ENCODE measurements at regions of chr19 and their contacts with region 1.

Region 1: GRCh38 chr19:54137086-54137921 is at the start of gene CNOT3:
- DNase-seq: peak; percentile 95 to 100 (median 100)
- ATAC-seq: peak; percentile 80
- H3K4me3 Mint-ChIP-seq: peak within 1 kb of the TSS; percentile 78 to 94 (median 91)
- H3K27ac Mint-ChIP-seq: peak within 1 kb of the TSS; percentile 87 to 98 (median 92)
- H3K4me1 Mint-ChIP-seq: peaks cover 29 to 54% (median 52%) of the 10 kb centered on the region in 4 donors
- H3K27me3 Mint-ChIP-seq: no peaks in the 10 kb centered on the region
- polyA plus RNA-seq, gene CNOT3: 6.6 to 14.5 (median 7.9) TPM

Region 2: DNA sequence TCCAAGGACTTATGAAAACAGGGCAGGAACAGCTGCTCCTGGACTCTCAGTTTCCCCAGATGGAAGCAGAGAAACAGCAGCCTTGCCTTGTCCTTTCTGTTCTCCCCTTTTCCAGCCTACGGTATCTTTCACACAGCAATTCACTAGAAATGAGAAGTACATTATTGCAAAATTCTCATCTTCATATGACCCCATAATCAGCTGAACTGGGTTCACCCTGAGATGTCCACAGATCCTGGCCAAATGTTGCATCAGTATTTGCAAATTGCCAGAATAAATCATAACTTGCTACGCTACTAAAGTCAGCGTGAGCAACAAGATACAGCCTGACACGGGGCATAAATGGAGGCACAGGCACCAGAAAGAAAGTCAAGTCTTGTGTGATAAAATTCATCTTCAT is 89.7 kb before region 1 on chr19:
- POLR2A ChIA-PET with region 1: no interaction called
- DNase-seq: no peak
- ATAC-seq: no peak
- H3K4me3 Mint-ChIP-seq: no peak overlapping the region
- H3K27ac Mint-ChIP-seq: no peak overlapping the region
- H3K4me1 Mint-ChIP-seq: no peaks in the 10 kb centered on the region
- H3K27me3 Mint-ChIP-seq: peaks cover 23 to 47% (median 26%) of the 10 kb centered on the region in 5 donors

Region 3: GRCh38 chr19:54077334-54077733 is 60.0 kb before region 1 on chr19:
- POLR2A ChIA-PET with region 1: no interaction called
- DNase-seq: no peak
- ATAC-seq: no peak
- H3K4me3 Mint-ChIP-seq: no peak overlapping the region
- H3K27ac Mint-ChIP-seq: no peak overlapping the region
- H3K4me1 Mint-ChIP-seq: no peaks in the 10 kb centered on the region
- H3K27me3 Mint-ChIP-seq: peaks cover 0 to 15% (median 6%) of the 10 kb centered on the region in 5 donors

Region 4: DNA sequence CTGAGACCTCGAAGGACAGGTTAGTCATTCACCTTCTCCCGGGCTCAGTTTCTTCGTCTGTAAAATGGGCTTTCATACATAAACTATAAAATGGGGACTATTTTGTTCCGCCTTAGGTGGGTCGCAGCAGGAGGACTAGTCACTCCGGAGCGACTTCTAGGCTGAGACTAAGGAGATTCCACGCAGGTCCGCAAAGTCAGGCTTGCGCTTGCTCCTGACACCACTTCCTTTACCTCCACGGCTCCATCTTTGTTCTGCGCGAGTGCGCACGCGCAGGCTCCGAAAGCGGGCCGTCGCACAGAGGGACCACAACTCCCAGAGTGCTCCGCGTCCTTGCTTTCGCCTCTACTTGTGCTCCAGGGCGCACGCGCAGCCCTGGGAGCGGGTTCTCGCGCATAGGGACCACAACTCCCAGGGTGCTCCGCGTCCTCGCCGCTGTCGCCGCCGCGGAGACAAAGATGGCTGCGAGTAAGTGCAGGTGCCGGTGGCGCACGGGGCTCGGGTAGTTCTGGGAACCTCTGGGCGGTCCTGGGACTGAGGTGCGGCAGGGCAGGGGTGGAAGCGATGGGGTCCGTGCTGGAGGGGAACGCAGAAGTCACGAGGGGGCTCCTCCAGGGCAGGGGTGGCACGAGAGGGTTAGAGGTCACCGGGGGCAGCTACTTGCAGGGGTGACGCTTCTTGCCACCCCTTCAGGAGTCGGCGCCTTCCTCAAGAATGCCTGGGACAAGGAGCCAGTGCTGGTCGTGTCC is 34.7 kb before region 1 on chr19 and contains the start of gene NDUFA3:
- POLR2A ChIA-PET with region 1: interaction called, 18 read pairs
- DNase-seq: peak; percentile 90 to 99 (median 98)
- ATAC-seq: peak; percentile 97 to 99
- H3K4me3 Mint-ChIP-seq: peak within 1 kb of the TSS; percentile 90 to 99 (median 98)
- H3K27ac Mint-ChIP-seq: peak within 1 kb of the TSS; percentile 89 to 99 (median 96)
- H3K4me1 Mint-ChIP-seq: peaks cover 18 to 40% (median 30%) of the 10 kb centered on the region in 4 donors
- H3K27me3 Mint-ChIP-seq: no peaks in the 10 kb centered on the region
- polyA plus RNA-seq, gene NDUFA3: 489 to 564 (median 529) TPM

Region 5: DNA sequence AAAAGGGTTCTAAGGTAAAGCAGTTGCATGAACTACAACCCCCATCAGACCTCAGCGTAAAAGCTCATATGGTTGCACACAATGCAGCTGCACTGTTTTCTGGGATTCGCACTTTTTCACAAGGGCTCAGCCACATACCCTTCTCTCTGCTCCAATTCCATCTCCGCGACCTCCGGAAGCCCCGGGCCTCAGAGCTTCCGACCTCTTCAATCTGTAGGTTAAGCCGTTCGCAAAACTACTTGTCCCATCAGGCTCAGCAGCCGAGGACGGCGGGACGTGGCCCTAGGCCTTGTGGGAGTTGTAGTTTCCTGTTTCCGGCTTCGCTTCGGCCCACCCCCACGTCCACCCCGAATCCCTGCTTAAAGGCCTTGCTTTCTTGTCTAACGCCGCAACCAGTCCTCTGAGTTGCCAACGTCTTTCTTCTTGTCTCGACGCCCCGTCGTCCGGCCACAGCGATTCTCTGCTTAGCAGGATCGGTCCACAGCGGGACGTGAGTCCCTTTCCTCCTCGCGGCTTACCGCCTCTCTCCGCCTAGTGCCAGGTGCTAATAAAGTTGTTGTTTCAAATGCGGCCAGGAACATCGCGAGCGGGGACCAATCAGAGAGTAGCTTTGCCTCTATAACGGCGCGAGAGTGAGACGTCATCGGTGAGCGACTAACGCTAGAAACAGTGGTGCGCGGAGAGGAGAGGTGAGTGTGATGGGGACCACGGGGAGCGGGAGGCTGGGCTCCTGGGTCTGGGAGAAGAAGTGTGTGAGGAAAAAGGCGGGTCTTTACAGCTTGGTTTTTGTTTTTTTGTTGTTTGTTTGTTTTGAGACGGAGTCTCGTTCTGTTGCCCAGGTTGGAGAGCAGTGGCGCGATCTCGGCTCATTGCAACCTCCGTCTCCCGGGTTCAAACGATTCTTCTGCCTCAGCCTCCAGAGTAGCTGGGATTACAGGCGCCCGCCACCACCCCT is 21.9 kb before region 1 on chr19 and contains the starts of genes PRPF31 and TFPT:
- POLR2A ChIA-PET with region 1: interaction called, 86 read pairs
- DNase-seq: peak; percentile 79 to 100 (median 96)
- ATAC-seq: peak; percentile 87 to 89
- H3K4me3 Mint-ChIP-seq: peak within 1 kb of the TSS; percentile 87 to 98 (median 93)
- H3K27ac Mint-ChIP-seq: peak within 1 kb of the TSS; percentile 89 to 99 (median 95)
- H3K4me1 Mint-ChIP-seq: peaks cover 16 to 50% (median 36%) of the 10 kb centered on the region in 4 donors
- H3K27me3 Mint-ChIP-seq: peaks cover 0 to 4% (median 0%) of the 10 kb centered on the region in 5 donors
- polyA plus RNA-seq, gene PRPF31: 64.0 to 82.4 (median 80.8) TPM
- polyA plus RNA-seq, gene TFPT: 17.4 to 24.4 (median 23.0) TPM

Region 6: GRCh38 chr19:54147676-54148075 is 10.4 kb after region 1 on chr19:
- POLR2A ChIA-PET with region 1: interaction called, 36 read pairs
- DNase-seq: no peak
- ATAC-seq: no peak
- H3K4me3 Mint-ChIP-seq: no peak overlapping the region
- H3K27ac Mint-ChIP-seq: peak overlapping the region in 2 of 10 donors; percentile 20 to 40
- H3K4me1 Mint-ChIP-seq: peaks cover 0 to 30% (median 12%) of the 10 kb centered on the region in 4 donors
- H3K27me3 Mint-ChIP-seq: no peaks in the 10 kb centered on the region

Region 7: GRCh38 chr19:54203151-54203611 is 65.9 kb after region 1 on chr19:
- POLR2A ChIA-PET with region 1: interaction called, 16 read pairs
- DNase-seq: no peak
- ATAC-seq: no peak
- H3K4me3 Mint-ChIP-seq: peak overlapping the region; percentile 9 to 100 (median 93)
- H3K27ac Mint-ChIP-seq: peak overlapping the region in 5 of 10 donors; percentile 31 to 68 (median 46)
- H3K4me1 Mint-ChIP-seq: peaks cover 18 to 83% (median 65%) of the 10 kb centered on the region in 4 donors
- H3K27me3 Mint-ChIP-seq: no peaks in the 10 kb centered on the region